ENCODE measurements at regions of chr5 and their contacts with region 1.

Region 1: DNA sequence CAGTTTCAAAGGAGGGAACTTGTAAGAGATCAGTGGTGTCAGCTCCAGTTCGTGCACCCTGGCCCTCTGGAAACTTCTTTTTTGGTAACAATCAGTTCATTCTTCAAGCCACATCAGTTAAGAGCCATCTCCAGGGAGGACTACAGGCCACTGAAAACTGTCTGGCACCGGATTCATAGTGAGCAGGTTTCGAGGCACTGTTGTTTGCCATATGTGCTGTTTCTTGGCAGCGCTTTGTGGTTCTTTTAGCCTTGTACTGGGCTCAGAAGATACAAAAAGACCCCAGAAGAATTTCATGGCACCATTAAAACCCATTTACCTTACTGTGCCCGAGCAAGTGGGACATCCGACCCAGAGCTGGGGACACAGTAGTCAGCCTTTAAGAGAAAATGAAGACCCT is 68.5 kb downstream of the OTULIN start:
- DNase-seq: no peak
- H3K4me3 ChIP-seq: no peak overlapping the region
- CTCF ChIP-seq: no peak

Region 2: DNA sequence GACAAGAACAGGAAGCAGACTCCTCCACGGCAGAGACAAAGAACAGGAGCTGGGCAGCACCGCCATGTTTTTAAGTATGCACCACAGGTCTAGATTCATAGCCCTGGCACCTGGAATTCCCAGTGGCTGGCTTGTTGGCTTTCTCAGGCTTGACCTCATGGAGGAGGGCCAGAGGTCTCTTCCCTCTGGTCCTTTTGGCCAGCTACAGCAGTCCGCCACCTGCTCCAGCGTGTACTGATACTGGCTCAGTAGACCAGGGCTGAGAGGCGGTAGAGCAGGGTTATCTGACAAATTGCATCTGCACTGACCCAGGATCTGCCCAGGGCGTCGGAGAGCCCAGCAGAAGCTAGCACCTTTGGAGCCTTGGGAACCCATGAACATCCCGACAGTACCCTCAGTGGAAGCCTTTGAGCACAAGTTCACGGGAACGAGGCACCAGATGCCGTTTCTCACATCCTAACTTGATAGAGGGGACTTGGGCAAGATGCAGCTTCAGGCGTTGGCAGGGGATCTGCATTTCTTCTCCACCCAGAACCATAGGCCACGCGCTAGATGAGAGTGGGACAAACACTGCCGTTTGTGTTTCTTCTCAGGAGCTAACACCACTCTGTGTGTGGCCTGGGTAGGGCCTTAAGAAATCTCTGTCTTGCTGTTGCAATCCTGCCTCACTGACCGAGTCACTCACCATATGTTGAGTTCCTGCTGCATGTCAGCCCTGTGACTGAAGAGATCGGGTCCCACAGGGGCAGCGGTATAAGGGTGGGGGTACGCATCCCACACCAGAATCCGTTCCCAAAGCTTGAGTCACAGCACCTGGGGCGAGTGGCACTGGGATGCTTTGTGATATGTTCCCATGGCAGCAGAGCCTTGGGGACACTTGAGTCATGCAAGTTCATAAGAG is 241.7 kb before region 1 on chr5:
- CTCF ChIA-PET with region 1: no interaction called
- POLR2A ChIA-PET with region 1: no interaction called
- DNase-seq: peak; percentile 23
- H3K4me3 ChIP-seq: no peak overlapping the region
- CTCF ChIP-seq: no peak

Region 3: DNA sequence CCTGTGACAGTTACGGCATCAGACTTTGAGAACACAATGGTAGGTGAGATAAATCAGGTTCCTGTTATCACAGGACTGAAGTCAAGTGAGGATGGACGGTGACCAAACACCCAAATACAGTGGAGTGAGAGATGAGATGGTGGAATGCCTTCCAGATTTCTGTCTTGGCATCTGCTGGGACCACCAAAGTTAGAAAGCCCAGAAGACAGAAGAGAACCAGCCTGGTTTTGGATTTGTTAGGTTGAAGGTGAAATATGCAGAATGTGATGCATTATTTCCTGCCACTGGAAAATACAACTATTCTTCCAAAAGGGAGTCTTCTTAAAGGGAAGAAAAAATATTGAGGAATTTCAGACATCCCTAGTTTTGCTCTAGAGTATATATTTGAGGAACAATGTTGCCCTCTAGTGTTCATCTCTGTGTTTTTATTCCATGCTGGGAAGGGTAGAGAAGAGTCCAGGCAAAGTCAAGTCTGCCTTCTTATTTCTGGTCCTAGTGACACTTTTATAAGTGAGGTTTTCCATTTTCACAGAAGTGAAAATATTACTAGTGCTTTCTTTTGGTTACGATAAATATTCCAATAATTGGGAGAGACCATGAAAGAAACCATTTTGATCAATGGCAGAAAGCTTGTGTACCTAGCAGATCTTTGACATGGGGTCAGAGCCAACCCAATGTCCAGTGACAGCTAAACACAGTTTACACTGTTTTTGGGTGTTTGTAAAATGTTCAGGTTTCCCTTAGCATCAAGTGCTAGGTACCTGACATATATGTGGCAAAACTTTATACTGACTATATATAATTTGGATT is 280.9 kb after region 1 on chr5:
- CTCF ChIA-PET with region 1: interaction called, 332 read pairs
- POLR2A ChIA-PET with region 1: no interaction called
- DNase-seq: no peak
- H3K4me3 ChIP-seq: no peak overlapping the region
- CTCF ChIP-seq: peak; percentile 32

Measured in AG04449 (cell line).